ENCODE measurements at regions of chr19 and their contacts with region 1.

Region 1: DNA sequence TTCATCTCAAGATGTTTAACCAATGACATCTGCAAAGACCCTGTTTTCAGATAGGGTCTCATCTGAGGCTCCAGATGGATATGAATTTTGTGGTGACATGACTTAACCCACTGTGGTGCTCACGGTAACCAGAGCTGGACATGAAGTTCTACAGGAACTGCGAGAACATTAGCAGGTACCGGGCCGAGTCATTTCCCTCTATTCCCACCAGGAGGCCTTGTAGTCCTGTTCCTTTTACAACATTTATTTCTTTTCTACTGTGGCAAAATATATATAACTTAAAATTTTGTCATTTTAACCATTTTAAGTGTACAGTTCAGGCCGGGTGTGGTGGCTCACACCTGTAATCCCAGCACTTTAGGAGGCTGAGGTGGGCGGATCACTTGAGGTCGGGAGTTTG is 7.6 kb upstream of the TSPAN16 start:
- DNase-seq: no peak
- ATAC-seq: peak; percentile 69
- H3K4me3 ChIP-seq: no peak overlapping the region
- H3K27ac ChIP-seq: no peak overlapping the region
- H3K4me1 ChIP-seq: peaks cover 41% of the 10 kb centered on the region
- H3K27me3 ChIP-seq: no peaks in the 10 kb centered on the region; a peak in 1 of 5 replicates
- CTCF ChIP-seq: peak; percentile 38
- EP300 ChIP-seq: no peak
- POLR2A ChIP-seq: no peak
- RAD21 ChIP-seq: no peak

Region 2: GRCh38 chr19:11337080-11337479 is 48.7 kb after region 1 on chr19:
- CTCF ChIA-PET with region 1: no interaction called
- POLR2A ChIA-PET with region 1: no interaction called
- in situ Hi-C with region 1: no loop called
- intact Hi-C with region 1: no loop called
- DNase-seq: no peak
- ATAC-seq: no peak
- H3K4me3 ChIP-seq: no peak overlapping the region
- H3K27ac ChIP-seq: no peak overlapping the region
- H3K4me1 ChIP-seq: peaks cover 22% of the 10 kb centered on the region
- H3K27me3 ChIP-seq: no peaks in the 10 kb centered on the region
- CTCF ChIP-seq: no peak
- EP300 ChIP-seq: no peak
- POLR2A ChIP-seq: no peak
- RAD21 ChIP-seq: no peak

Region 3: GRCh38 chr19:11453468-11454341 is 165.4 kb after region 1 on chr19:
- CTCF ChIA-PET with region 1: no interaction called
- POLR2A ChIA-PET with region 1: no interaction called
- in situ Hi-C with region 1: loop called (anchors 10 kb)
- intact Hi-C with region 1: loop called (anchors 10 kb)
- DNase-seq: no peak
- ATAC-seq: 0 out of 3 replicates have a peak, but pooled peaks have one; percentile 18
- H3K4me3 ChIP-seq: peak overlapping the region; percentile 17 to 45 (median 28); a peak in 4 of 6 replicates
- H3K27ac ChIP-seq: no peak overlapping the region
- H3K4me1 ChIP-seq: peaks cover 18% of the 10 kb centered on the region
- H3K27me3 ChIP-seq: peaks cover 1 to 12% of the 10 kb centered on the region in 2 experiments; a peak in 2 of 5 replicates
- CTCF ChIP-seq: peak; percentile 38
- EP300 ChIP-seq: no peak
- POLR2A ChIP-seq: no peak
- RAD21 ChIP-seq: no peak

Measured in HepG2 (cell line).